ENCODE measurements at regions of chr2 and their contacts with region 1.

Region 1: GRCh38 chr2:199973703-199974102 is 18.3 kb downstream of the MAIP1 start:
- DNase-seq: peak; percentile 46
- ATAC-seq: peak; percentile 79
- H3K4me3 ChIP-seq: no peak overlapping the region
- H3K27ac ChIP-seq: no peak overlapping the region
- H3K4me1 ChIP-seq: peaks cover 26% of the 10 kb centered on the region
- H3K27me3 ChIP-seq: no peaks in the 10 kb centered on the region
- CTCF ChIP-seq: peak; percentile 83
- EP300 ChIP-seq: no peak
- POLR2A ChIP-seq: no peak
- RAD21 ChIP-seq: peak; percentile 71

Region 2: DNA sequence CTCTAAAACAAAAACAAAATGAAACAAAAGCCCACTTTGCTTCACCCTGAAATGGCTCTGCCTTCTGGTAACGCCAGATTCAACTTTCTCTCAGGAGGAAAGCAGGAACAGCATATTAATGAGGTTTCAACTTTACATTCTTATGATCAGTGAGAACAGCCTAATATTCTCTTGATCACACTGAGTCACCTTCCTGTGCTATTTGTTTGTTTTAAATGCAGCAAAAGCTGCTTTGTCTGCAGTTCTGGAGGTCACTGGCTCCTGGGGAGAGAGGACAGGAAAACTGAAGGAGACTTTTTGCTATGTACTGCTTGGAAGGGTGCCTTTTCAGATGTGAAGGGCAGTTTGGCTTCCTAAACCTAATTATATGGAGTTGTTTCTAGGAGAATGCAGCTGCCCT is 29.7 kb after region 1 on chr2:
- CTCF ChIA-PET with region 1: no interaction called
- POLR2A ChIA-PET with region 1: no interaction called
- in situ Hi-C with region 1: no loop called
- intact Hi-C with region 1: no loop called
- DNase-seq: no peak
- ATAC-seq: no peak
- H3K4me3 ChIP-seq: no peak overlapping the region
- H3K27ac ChIP-seq: no peak overlapping the region
- H3K4me1 ChIP-seq: no peaks in the 10 kb centered on the region
- H3K27me3 ChIP-seq: peaks cover 3 to 8% of the 10 kb centered on the region in 2 experiments; a peak in 2 of 5 replicates
- CTCF ChIP-seq: no peak
- EP300 ChIP-seq: no peak
- POLR2A ChIP-seq: no peak
- RAD21 ChIP-seq: no peak

Region 3: DNA sequence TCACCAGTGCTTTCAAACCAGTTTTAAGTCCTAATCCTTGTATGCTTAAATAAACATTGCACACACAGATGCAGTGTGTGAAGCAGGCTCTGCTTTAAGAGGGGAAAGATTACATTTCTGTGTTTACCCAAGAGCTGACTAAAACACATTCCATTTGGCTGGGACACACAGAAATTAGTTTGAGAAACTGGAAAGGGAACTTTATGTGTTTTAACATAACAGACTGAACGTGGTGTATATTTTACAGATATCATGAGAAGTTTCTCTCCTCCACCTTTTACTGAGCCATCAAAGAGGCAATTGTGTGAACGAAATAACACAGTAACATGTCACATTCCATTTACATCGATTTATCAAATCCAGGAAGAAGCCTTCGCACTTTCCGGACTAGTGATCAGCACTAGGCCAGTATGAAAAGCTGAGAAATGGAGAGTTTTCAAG is 103.5 kb after region 1 on chr2:
- CTCF ChIA-PET with region 1: no interaction called
- POLR2A ChIA-PET with region 1: no interaction called
- in situ Hi-C with region 1: no loop called
- intact Hi-C with region 1: no loop called
- DNase-seq: peak; percentile 92
- ATAC-seq: peak; percentile 100
- H3K4me3 ChIP-seq: peak overlapping the region; percentile 30 to 54 (median 45); a peak in 4 of 6 replicates
- H3K27ac ChIP-seq: peak overlapping the region; percentile 68
- H3K4me1 ChIP-seq: peaks cover 24% of the 10 kb centered on the region
- H3K27me3 ChIP-seq: peaks cover 0 to 20% of the 10 kb centered on the region in 2 experiments; a peak in 3 of 5 replicates
- CTCF ChIP-seq: no peak
- EP300 ChIP-seq: peak in 1 of 2 experiments; percentile 89; a peak in 2 of 4 replicates
- POLR2A ChIP-seq: no peak
- RAD21 ChIP-seq: no peak

Region 4: GRCh38 chr2:200127848-200128247 is 154.1 kb after region 1 on chr2:
- CTCF ChIA-PET with region 1: no interaction called
- POLR2A ChIA-PET with region 1: no interaction called
- in situ Hi-C with region 1: no loop called
- intact Hi-C with region 1: no loop called
- DNase-seq: peak; percentile 68
- ATAC-seq: peak; percentile 70
- H3K4me3 ChIP-seq: no peak overlapping the region
- H3K27ac ChIP-seq: no peak overlapping the region
- H3K4me1 ChIP-seq: peaks cover 70% of the 10 kb centered on the region
- H3K27me3 ChIP-seq: no peaks in the 10 kb centered on the region
- CTCF ChIP-seq: no peak
- EP300 ChIP-seq: no peak
- POLR2A ChIP-seq: no peak
- RAD21 ChIP-seq: no peak

Region 5: GRCh38 chr2:200288658-200289427 is 315.1 kb after region 1 on chr2:
- CTCF ChIA-PET with region 1: no interaction called
- POLR2A ChIA-PET with region 1: no interaction called
- in situ Hi-C with region 1: no loop called
- intact Hi-C with region 1: no loop called
- DNase-seq: no peak
- ATAC-seq: peak; percentile 51
- H3K4me3 ChIP-seq: no peak overlapping the region
- H3K27ac ChIP-seq: no peak overlapping the region
- H3K4me1 ChIP-seq: no peaks in the 10 kb centered on the region; the same call in 1 of the 2 replicates
- H3K27me3 ChIP-seq: no peaks in the 10 kb centered on the region; a peak in 1 of 5 replicates
- CTCF ChIP-seq: no peak
- EP300 ChIP-seq: no peak
- POLR2A ChIP-seq: no peak
- RAD21 ChIP-seq: no peak

Region 6: DNA sequence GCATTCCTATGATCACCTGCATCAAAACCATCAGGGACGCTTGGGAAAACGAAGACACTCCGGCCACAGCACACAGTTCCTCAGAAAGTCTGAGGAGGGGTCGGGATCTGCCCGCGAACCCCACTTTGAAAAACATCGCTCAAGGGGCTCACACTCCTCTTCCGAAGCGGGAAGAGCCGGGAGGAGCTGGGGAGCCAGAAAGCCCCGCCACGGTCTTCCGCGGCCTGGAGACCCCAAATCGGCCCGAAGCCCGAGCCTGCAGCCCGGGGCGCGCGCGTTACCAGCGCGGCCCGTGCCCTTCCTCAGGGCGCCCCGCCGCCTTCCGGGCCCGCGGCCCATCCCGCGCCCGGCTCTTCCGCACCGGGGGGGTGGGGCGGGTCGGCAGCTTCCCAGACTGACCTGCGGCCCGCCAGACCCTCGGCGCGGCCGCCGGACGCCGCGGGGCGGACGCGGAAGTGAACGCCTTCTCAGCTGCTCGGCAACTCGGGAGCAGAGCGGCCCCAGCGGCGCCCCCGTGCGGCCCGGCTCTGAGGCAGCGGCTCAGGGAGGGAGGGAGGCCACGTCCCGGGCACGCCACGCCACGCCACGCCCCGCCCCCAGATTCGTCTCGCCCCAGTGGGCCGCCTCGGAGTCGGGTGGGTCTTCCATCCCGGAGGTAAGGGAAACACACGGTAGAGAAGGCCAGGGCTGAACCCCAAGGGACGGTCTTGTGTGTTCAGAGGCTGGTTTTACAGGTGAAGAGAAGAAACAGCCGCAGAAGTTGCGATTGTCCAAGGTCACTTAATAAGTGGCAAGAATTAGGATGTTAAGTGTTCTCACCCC is 536.1 kb after region 1 on chr2 and contains the start of gene KCTD18:
- CTCF ChIA-PET with region 1: interaction called, 9 read pairs
- POLR2A ChIA-PET with region 1: interaction called, 3 read pairs
- in situ Hi-C with region 1: no loop called
- intact Hi-C with region 1: loop called (anchors 2 kb)
- DNase-seq: peak; percentile 84
- ATAC-seq: peak; percentile 96
- H3K4me3 ChIP-seq: peak within 1 kb of the TSS; percentile 89 to 98 (median 94)
- H3K27ac ChIP-seq: peak within 1 kb of the TSS; percentile 69
- H3K4me1 ChIP-seq: peaks cover 23% of the 10 kb centered on the region
- H3K27me3 ChIP-seq: peaks cover 0 to 8% of the 10 kb centered on the region in 2 experiments; a peak in 1 of 5 replicates
- CTCF ChIP-seq: peak; percentile 93
- EP300 ChIP-seq: peak in 1 of 2 experiments; percentile 61; a peak in 3 of 4 replicates
- POLR2A ChIP-seq: peak; percentile 77 to 81
- RAD21 ChIP-seq: peak; percentile 94
- total RNA-seq, gene KCTD18: 7.0 and 7.1 TPM in 2 replicates

Region 7: DNA sequence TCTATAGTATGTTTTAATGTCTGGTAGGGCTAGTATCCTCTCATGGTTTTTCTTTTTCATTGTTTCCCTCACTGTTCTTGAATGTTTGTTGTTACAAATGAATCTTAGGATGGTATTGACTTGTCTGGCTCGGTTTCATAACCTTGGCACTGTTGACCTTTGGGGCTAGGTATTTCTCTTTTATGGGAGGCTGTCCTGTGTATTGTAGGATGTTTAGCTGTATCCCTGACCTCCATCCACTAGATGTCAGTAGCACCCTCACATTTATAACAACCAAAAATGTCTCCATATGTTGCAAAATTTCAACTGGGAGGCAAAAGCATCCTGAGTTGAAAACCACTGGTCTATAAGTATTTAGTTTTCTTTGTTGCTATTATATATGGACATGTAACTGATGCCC is 605.1 kb after region 1 on chr2:
- CTCF ChIA-PET with region 1: no interaction called
- POLR2A ChIA-PET with region 1: no interaction called
- in situ Hi-C with region 1: no loop called
- intact Hi-C with region 1: loop called (anchors 5 kb)
- DNase-seq: peak; percentile 83
- ATAC-seq: peak; percentile 100
- H3K4me3 ChIP-seq: no peak overlapping the region
- H3K27ac ChIP-seq: no peak overlapping the region
- H3K4me1 ChIP-seq: peaks cover 8% of the 10 kb centered on the region
- H3K27me3 ChIP-seq: no peaks in the 10 kb centered on the region
- CTCF ChIP-seq: peak; percentile 88
- EP300 ChIP-seq: peak in 1 of 2 experiments; percentile 44; a peak in 1 of 4 replicates
- POLR2A ChIP-seq: no peak
- RAD21 ChIP-seq: peak; percentile 84

Region 8: DNA sequence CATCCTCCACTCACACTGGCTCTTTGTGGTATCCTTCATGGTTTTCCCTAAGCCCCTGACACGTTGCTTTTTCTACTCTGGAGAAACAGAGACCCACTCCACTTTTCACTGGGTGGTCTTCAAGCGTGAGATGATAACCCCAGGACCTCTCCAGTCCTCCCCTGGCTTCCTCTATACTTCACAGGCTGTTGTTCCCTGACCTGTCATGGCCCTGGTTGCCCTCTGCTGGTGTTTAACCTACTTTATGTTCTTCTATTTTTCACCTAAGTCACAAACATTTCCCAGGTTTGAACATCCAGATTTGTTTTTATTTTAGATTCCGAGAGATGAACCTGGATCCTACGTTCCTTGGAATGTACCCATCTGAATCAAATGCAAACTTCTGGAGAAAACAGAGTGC is 696.6 kb after region 1 on chr2:
- CTCF ChIA-PET with region 1: no interaction called
- POLR2A ChIA-PET with region 1: no interaction called
- in situ Hi-C with region 1: no loop called
- intact Hi-C with region 1: loop called (anchors 1 kb)
- DNase-seq: no peak
- ATAC-seq: peak; percentile 78
- H3K4me3 ChIP-seq: no peak overlapping the region
- H3K27ac ChIP-seq: no peak overlapping the region
- H3K4me1 ChIP-seq: peaks cover 17% of the 10 kb centered on the region
- H3K27me3 ChIP-seq: no peaks in the 10 kb centered on the region
- CTCF ChIP-seq: peak; percentile 45
- EP300 ChIP-seq: no peak
- POLR2A ChIP-seq: no peak
- RAD21 ChIP-seq: 0 out of 2 replicates have a peak, but pooled peaks have one; percentile 38